ENCODE measurements at regions of chr18 and their contacts with region 1.

Region 1: GRCh38 chr18:48161191-48161910 is 230.9 kb upstream of the SMAD2 start:
- DNase-seq: peak; percentile 50
- H3K4me3 Mint-ChIP-seq: peak overlapping the region; percentile 60
- H3K27ac Mint-ChIP-seq: no peak overlapping the region
- H3K4me1 Mint-ChIP-seq: no peaks in the 10 kb centered on the region
- H3K27me3 Mint-ChIP-seq: peaks cover 27% of the 10 kb centered on the region

Region 2: GRCh38 chr18:48129621-48130082 is 31.7 kb before region 1 on chr18:
- intact Hi-C with region 1: loop called (anchors 1 kb)
- DNase-seq: no peak
- H3K4me3 Mint-ChIP-seq: no peak overlapping the region
- H3K27ac Mint-ChIP-seq: no peak overlapping the region
- H3K4me1 Mint-ChIP-seq: peaks cover 35% of the 10 kb centered on the region
- H3K27me3 Mint-ChIP-seq: peaks cover 60% of the 10 kb centered on the region

Region 3: GRCh38 chr18:48136531-48137332 is 24.6 kb before region 1 on chr18:
- intact Hi-C with region 1: loop called (anchors 2 kb)
- DNase-seq: no peak
- H3K4me3 Mint-ChIP-seq: peak overlapping the region; percentile 72
- H3K27ac Mint-ChIP-seq: peak overlapping the region; percentile 71
- H3K4me1 Mint-ChIP-seq: peaks cover 35% of the 10 kb centered on the region
- H3K27me3 Mint-ChIP-seq: peaks cover 62% of the 10 kb centered on the region

Measured in activated T-helper 1 cell treated with anti-CD3 and anti-CD28 coated beads, Interleukin-12 subunit alpha, Interleukin-12 subunit beta, Interleukin-2, Interleukin-4 antibody, amounts not matched to agents 30 ng/mL and 10 ng/mL and 1 ng/mL, durations not matched to agents 14 hours and 24 hours and 36 hours (primary cell).